Activated naive CD4-positive, alpha-beta T cell treated with anti-CD3 and anti-CD28 coated beads for 36 hours (primary cell): ENCODE measurements at regions of chr10 and their contacts with region 1.

Region 1: GRCh38 chr10:112461029-112461887 is 14.2 kb downstream of the VTI1A start:
- DNase-seq: peak; percentile 90
- H3K4me3 Mint-ChIP-seq: no peak overlapping the region
- H3K27ac Mint-ChIP-seq: peak overlapping the region; percentile 95
- H3K4me1 Mint-ChIP-seq: peaks cover 23% of the 10 kb centered on the region
- H3K27me3 Mint-ChIP-seq: no peaks in the 10 kb centered on the region

Region 2: GRCh38 chr10:111840546-111840945 is 620.7 kb before region 1 on chr10:
- CTCF ChIA-PET with region 1: no interaction called
- intact Hi-C with region 1: no loop called
- DNase-seq: no peak
- H3K4me3 Mint-ChIP-seq: no peak overlapping the region
- H3K27ac Mint-ChIP-seq: no peak overlapping the region
- H3K4me1 Mint-ChIP-seq: no peaks in the 10 kb centered on the region
- H3K27me3 Mint-ChIP-seq: peaks cover 5% of the 10 kb centered on the region

Region 3: DNA sequence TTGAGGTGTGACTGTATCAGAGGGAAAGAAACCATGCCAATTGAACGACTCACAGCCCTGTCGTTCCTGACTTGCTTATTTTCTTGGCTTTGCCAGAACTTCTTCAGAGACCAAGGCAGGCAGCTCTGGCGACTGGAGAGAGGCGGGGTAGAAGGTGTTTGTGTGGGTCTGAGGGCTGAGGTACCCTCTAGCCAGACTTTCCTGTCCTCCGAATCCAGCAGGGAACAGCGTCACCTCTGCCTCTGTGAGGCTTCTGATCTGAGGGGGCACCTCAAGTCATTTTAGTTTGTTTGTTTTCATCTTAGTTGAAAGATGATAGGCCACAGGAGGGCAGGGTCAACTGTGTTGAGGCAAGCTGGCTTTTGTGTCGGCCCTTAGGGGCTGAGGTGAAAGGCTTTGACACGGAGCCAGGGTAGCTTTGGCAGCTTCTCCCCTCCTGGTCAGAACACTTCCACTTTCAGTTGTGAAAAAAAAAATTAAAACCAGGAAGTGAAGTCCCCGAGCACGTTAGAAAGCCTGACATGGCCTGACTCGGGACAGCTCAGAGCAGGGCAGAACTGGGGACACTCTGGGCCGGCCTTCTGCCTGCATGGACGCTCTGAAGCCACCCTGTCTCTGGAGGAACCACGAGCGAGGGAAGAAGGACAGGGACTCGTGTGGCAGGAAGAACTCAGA is 85.4 kb before region 1 on chr10:
- CTCF ChIA-PET with region 1: interaction called, 3 read pairs
- intact Hi-C with region 1: loop called (anchors 1 kb)
- DNase-seq: peak; percentile 49
- H3K4me3 Mint-ChIP-seq: peak overlapping the region; percentile 97
- H3K27ac Mint-ChIP-seq: peak overlapping the region; percentile 99
- H3K4me1 Mint-ChIP-seq: peaks cover 55% of the 10 kb centered on the region
- H3K27me3 Mint-ChIP-seq: no peaks in the 10 kb centered on the region

Region 4: DNA sequence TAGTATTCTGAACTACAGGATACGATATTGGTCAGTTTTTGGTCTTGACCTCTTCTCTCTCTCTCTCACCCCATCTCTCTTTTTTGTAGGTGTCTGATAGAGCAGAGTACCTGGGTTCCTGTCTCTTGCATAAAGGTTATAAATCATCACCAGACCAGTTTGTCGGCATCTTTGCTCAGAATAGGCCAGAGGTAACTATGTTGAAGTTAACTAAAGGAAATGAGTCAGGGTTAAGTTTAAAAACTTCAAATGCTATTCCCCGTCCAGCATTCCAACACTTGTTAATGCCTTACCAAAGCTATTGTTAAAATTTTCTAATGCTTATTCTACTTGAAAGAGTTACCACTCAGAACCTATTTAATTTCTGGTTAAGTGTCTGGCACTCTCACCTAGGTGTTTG is 56.6 kb before region 1 on chr10:
- CTCF ChIA-PET with region 1: no interaction called
- intact Hi-C with region 1: no loop called
- DNase-seq: no peak
- H3K4me3 Mint-ChIP-seq: no peak overlapping the region
- H3K27ac Mint-ChIP-seq: no peak overlapping the region
- H3K4me1 Mint-ChIP-seq: peaks cover 5% of the 10 kb centered on the region
- H3K27me3 Mint-ChIP-seq: no peaks in the 10 kb centered on the region

Region 5: DNA sequence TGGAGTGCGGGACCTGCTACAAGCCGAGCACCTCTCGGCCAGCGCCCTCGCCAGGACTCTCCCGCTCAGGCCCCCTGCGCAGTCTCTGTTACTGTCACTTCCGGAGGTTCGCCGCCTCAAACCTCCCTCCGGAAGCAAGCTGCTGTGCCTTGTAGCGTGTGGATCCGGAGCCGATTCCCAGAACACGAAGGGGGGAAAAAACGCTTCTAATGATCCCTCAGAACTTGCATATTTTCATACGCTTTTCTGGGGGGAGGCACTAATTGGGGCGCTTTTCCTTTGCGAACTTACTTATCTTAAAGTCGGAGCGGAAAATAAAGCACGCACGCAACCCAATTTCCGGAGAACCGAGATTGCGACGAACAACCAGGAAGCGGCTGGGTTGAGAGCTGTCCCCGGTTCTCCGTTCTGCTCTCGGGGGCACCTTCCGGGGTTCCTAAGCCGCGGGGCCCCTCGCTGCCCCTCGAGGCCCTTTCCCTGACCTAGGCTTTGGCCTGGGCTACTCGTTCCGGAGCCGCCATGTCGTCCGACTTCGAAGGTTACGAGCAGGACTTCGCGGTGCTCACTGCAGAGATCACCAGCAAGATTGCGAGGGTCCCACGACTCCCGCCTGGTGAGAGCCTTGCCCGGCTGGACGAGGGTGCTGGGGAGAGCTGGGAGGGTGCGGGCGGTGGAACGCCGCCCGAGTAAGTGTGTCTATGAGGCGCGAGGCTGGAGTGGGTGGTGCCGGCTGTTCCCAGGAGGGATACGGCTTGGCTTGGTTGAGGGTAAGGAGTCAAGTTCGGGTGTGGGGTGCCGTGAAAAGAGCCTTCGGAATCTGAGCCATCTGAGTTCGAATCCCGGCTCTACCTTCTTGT is 14.2 kb before region 1 on chr10 and contains the starts of genes VTI1A and ZDHHC6:
- CTCF ChIA-PET with region 1: interaction called, 4 read pairs
- intact Hi-C with region 1: loop called (anchors 1 kb)
- DNase-seq: peak; percentile 89
- H3K4me3 Mint-ChIP-seq: peak within 1 kb of the TSS; percentile 84
- H3K27ac Mint-ChIP-seq: peak within 1 kb of the TSS; percentile 86
- H3K4me1 Mint-ChIP-seq: peaks cover 57% of the 10 kb centered on the region
- H3K27me3 Mint-ChIP-seq: no peaks in the 10 kb centered on the region
- total RNA-seq, gene VTI1A: 24.9 to 28.4 TPM
- total RNA-seq, gene ZDHHC6: 37.8 to 39.0 TPM

Region 6: DNA sequence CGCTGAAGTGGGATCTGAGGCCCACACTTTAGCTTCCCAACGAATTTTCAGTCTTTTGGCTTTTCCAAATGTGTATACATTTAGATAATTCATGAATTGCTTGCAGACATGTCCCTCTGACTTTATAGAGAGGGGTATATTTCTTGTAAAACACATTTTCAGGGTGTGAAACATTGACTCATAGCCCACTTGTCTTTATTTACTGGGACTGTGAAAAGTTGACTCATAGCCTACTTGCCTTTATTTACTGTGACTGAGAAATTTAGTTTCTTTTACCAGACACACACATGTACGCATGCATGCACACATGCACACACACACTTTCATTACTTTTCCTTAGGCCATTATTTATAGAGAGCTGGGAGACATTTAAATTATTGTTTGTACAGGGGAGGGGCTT is 64.9 kb after region 1 on chr10:
- CTCF ChIA-PET with region 1: no interaction called
- intact Hi-C with region 1: loop called (anchors 1 kb)
- DNase-seq: no peak
- H3K4me3 Mint-ChIP-seq: no peak overlapping the region
- H3K27ac Mint-ChIP-seq: no peak overlapping the region
- H3K4me1 Mint-ChIP-seq: peaks cover 34% of the 10 kb centered on the region
- H3K27me3 Mint-ChIP-seq: no peaks in the 10 kb centered on the region

Region 7: GRCh38 chr10:113326160-113327111 is 865.2 kb after region 1 on chr10:
- CTCF ChIA-PET with region 1: no interaction called
- intact Hi-C with region 1: loop called (anchors 10 kb)
- DNase-seq: peak; percentile 64
- H3K4me3 Mint-ChIP-seq: no peak overlapping the region
- H3K27ac Mint-ChIP-seq: no peak overlapping the region
- H3K4me1 Mint-ChIP-seq: peaks cover 6% of the 10 kb centered on the region
- H3K27me3 Mint-ChIP-seq: peaks cover 9% of the 10 kb centered on the region